Activated CD4-positive, alpha-beta T cell treated with anti-CD3 and anti-CD28 coated beads, Interleukin-2, amount 10 ng/mL, durations not matched to agents 24 days and 14 days (primary cell): ENCODE measurements at regions of chr13 and their contacts with region 1.

Region 1: GRCh38 chr13:77329133-77329910 is 2.4 kb upstream of the MYCBP2 start:
- DNase-seq: peak; percentile 97
- H3K4me3 Mint-ChIP-seq: peak overlapping the region; percentile 87
- H3K27ac Mint-ChIP-seq: peak overlapping the region; percentile 99
- H3K4me1 Mint-ChIP-seq: peaks cover 33% of the 10 kb centered on the region
- H3K27me3 Mint-ChIP-seq: peaks cover 8% of the 10 kb centered on the region

Region 2: GRCh38 chr13:76886292-76887075 is 442.8 kb before region 1 on chr13 and contains the start of gene KCTD12:
- intact Hi-C with region 1: loop called (anchors 5 kb)
- DNase-seq: peak; percentile 93
- H3K4me3 Mint-ChIP-seq: peak within 1 kb of the TSS; percentile 89
- H3K27ac Mint-ChIP-seq: peak within 1 kb of the TSS; percentile 87
- H3K4me1 Mint-ChIP-seq: peaks cover 26% of the 10 kb centered on the region
- H3K27me3 Mint-ChIP-seq: peaks cover 40% of the 10 kb centered on the region
- total RNA-seq, gene KCTD12: 11.8 and 12.9 TPM in 2 replicates

Region 3: DNA sequence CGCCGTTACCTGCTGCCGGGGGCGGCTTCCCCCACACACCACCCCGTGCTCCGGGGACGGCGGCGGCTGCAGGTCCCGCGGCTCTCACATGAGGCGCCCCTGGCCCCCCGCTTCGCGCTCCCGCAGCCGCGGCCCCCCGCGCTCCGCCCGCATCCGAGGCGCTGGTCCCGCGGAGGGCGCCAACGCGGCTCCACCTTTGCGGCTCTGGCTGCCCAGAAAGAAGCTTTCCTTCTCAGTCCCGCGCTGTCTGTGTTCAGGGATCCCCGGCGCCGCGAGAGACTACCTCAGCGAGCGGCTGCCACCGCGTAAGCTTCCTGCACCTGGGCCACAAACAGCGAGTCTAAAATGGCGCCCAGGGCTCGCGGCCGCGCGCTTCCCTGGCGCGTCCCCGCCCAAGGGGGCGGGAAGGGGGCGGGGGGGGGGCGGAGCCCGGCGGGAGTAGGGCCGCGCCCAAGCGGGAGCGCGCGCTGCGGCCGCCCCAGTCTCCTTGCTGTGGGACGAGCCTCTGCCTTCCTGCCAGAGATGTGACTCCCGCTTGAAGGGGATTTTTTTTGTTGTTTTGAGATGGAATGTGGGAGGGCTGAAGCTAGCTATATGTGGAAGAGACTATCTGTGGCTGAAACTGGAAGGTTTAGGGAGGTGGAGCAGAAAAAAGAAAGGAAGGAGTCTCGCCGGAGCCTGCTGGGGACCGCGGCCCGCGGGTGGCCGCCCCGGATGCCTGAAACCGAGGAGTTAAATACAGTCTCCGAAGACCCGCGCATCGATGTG is 302.3 kb before region 1 on chr13 and contains the start of gene FBXL3:
- intact Hi-C with region 1: loop called (anchors 1 kb)
- DNase-seq: peak; percentile 94
- H3K4me3 Mint-ChIP-seq: peak within 1 kb of the TSS; percentile 99
- H3K27ac Mint-ChIP-seq: peak within 1 kb of the TSS; percentile 95
- H3K4me1 Mint-ChIP-seq: peaks cover 48% of the 10 kb centered on the region
- H3K27me3 Mint-ChIP-seq: no peaks in the 10 kb centered on the region
- total RNA-seq, gene FBXL3: 36.0 and 41.6 TPM in 2 replicates

Region 4: GRCh38 chr13:77230560-77230959 is 98.8 kb before region 1 on chr13:
- intact Hi-C with region 1: loop called (anchors 5 kb)
- DNase-seq: no peak
- H3K4me3 Mint-ChIP-seq: no peak overlapping the region
- H3K27ac Mint-ChIP-seq: peak overlapping the region; percentile 62
- H3K4me1 Mint-ChIP-seq: peaks cover 12% of the 10 kb centered on the region
- H3K27me3 Mint-ChIP-seq: no peaks in the 10 kb centered on the region

Region 5: GRCh38 chr13:77345150-77345780 is 15.9 kb after region 1 on chr13:
- intact Hi-C with region 1: loop called (anchors 1 kb)
- DNase-seq: peak; percentile 57
- H3K4me3 Mint-ChIP-seq: peak overlapping the region; percentile 36
- H3K27ac Mint-ChIP-seq: peak overlapping the region; percentile 89
- H3K4me1 Mint-ChIP-seq: peaks cover 8% of the 10 kb centered on the region
- H3K27me3 Mint-ChIP-seq: no peaks in the 10 kb centered on the region

Region 6: GRCh38 chr13:77697217-77698103 is 368.1 kb after region 1 on chr13 and contains the start of gene SLAIN1:
- intact Hi-C with region 1: loop called (anchors 1 kb)
- DNase-seq: peak; percentile 94
- H3K4me3 Mint-ChIP-seq: peak within 1 kb of the TSS; percentile 99
- H3K27ac Mint-ChIP-seq: peak within 1 kb of the TSS; percentile 68
- H3K4me1 Mint-ChIP-seq: peaks cover 31% of the 10 kb centered on the region
- H3K27me3 Mint-ChIP-seq: peaks cover 35% of the 10 kb centered on the region
- total RNA-seq, gene SLAIN1: 28.7 and 29.1 TPM in 2 replicates

Region 7: GRCh38 chr13:77751513-77752456 is 422.5 kb after region 1 on chr13:
- intact Hi-C with region 1: loop called (anchors 5 kb)
- DNase-seq: peak; percentile 87
- H3K4me3 Mint-ChIP-seq: no peak overlapping the region
- H3K27ac Mint-ChIP-seq: peak overlapping the region; percentile 69
- H3K4me1 Mint-ChIP-seq: peaks cover 14% of the 10 kb centered on the region
- H3K27me3 Mint-ChIP-seq: no peaks in the 10 kb centered on the region